ENCODE measurements at regions of chr1 and their contacts with region 1.

Region 1: GRCh38 chr1:157984469-157984868 is 9.0 kb upstream of the KIRREL1 start:
- DNase-seq: no peak
- H3K4me3 ChIP-seq: no peak overlapping the region
- H3K4me3 Mint-ChIP-seq: no peak overlapping the region
- H3K27ac ChIP-seq: no peak overlapping the region
- H3K27ac Mint-ChIP-seq: no peak overlapping the region
- H3K4me1 ChIP-seq: no peaks in the 10 kb centered on the region
- H3K4me1 Mint-ChIP-seq: no peaks in the 10 kb centered on the region
- H3K27me3 ChIP-seq: no peaks in the 10 kb centered on the region
- H3K27me3 Mint-ChIP-seq: peaks cover 5 to 10% (median 8%) of the 10 kb centered on the region in 3 donors
- CTCF ChIP-seq: no peak

Region 2: GRCh38 chr1:157925419-157926166 is 58.9 kb before region 1 on chr1:
- intact Hi-C with region 1: loop called in 1 of 2 experiments (anchors 10 kb)
- DNase-seq: no peak
- H3K4me3 ChIP-seq: no peak overlapping the region
- H3K4me3 Mint-ChIP-seq: no peak overlapping the region
- H3K27ac ChIP-seq: no peak overlapping the region
- H3K27ac Mint-ChIP-seq: no peak overlapping the region
- H3K4me1 ChIP-seq: no peaks in the 10 kb centered on the region
- H3K4me1 Mint-ChIP-seq: peaks cover 6% of the 10 kb centered on the region
- H3K27me3 ChIP-seq: no peaks in the 10 kb centered on the region
- H3K27me3 Mint-ChIP-seq: peaks cover 9 to 10% (median 9%) of the 10 kb centered on the region in 3 donors
- CTCF ChIP-seq: no peak